Activated CD4-positive, alpha-beta T cell treated with anti-CD3 and anti-CD28 coated beads for 36 hours (primary cell): ENCODE measurements at regions of chr7 and their contacts with region 1.

Region 1: GRCh38 chr7:134632937-134633540 is 13.6 kb upstream of the BPGM start:
- DNase-seq: peak; percentile 49
- ATAC-seq: peak; percentile 63
- H3K4me3 Mint-ChIP-seq: no peak overlapping the region
- H3K27ac Mint-ChIP-seq: no peak overlapping the region
- H3K4me1 Mint-ChIP-seq: peaks cover 30% of the 10 kb centered on the region
- H3K27me3 Mint-ChIP-seq: peaks cover 7% of the 10 kb centered on the region

Region 2: GRCh38 chr7:134403677-134404076 is 229.4 kb before region 1 on chr7:
- CTCF ChIA-PET with region 1: no interaction called
- POLR2A ChIA-PET with region 1: no interaction called
- intact Hi-C with region 1: no loop called
- DNase-seq: no peak
- ATAC-seq: no peak
- H3K4me3 Mint-ChIP-seq: no peak overlapping the region
- H3K27ac Mint-ChIP-seq: no peak overlapping the region
- H3K4me1 Mint-ChIP-seq: no peaks in the 10 kb centered on the region
- H3K27me3 Mint-ChIP-seq: peaks cover 19% of the 10 kb centered on the region

Region 3: DNA sequence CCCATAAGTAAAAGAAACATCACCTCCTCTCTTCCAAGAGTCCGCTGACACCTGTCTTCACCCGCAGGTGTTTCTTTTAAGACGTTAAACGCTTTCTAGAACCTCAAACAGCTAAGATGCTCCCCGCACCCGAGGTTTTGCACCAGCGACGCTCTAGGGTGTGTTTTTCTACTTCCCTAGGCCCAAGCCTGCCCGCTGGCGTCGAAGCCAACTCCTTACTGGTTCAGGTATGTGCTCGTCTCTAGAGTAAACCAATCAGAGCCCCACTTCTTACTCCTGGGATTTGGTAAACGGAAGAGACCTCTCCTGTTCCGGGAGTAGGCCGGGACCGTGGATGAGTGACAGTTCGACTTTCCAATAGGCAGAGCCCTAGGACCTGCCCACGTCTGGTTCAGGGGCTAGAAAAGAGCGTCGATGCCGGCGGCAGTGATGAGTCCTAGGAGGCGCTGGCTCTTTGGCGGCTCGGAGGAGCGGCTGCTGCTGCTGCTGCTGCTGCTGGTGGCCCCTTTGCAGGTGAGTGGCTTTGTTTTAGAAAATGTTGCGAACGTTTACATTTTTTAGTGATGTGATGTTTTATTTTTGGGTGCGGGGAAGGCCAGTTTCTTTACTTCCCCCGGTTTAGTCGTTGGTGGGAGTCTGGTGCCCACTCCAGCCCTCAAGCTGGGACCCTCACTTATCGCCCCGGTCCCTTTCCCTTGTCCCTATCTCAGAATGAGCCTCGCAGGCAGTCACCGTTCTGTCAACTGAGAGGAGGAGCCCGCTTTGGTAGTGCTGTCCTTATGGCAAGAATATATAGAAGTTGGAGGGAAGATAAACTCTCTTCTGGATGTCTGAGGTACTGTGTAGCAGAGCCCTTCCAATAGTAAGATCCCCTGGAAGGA is 13.6 kb after region 1 on chr7 and contains the start of gene BPGM:
- CTCF ChIA-PET with region 1: interaction called, 29 read pairs
- POLR2A ChIA-PET with region 1: no interaction called
- intact Hi-C with region 1: loop called (anchors 1 kb)
- DNase-seq: peak; percentile 97
- ATAC-seq: peak; percentile 99
- H3K4me3 Mint-ChIP-seq: no peak within 1 kb of the TSS
- H3K27ac Mint-ChIP-seq: no peak within 1 kb of the TSS
- H3K4me1 Mint-ChIP-seq: peaks cover 44% of the 10 kb centered on the region
- H3K27me3 Mint-ChIP-seq: no peaks in the 10 kb centered on the region
- total RNA-seq, gene BPGM: 17.5 to 18.6 TPM

Region 4: GRCh38 chr7:134710859-134711624 is 78.0 kb after region 1 on chr7:
- CTCF ChIA-PET with region 1: no interaction called
- POLR2A ChIA-PET with region 1: no interaction called
- intact Hi-C with region 1: loop called in 1 of 2 experiments (anchors 2 kb)
- DNase-seq: peak; percentile 80
- ATAC-seq: peak; percentile 94
- H3K4me3 Mint-ChIP-seq: peak overlapping the region; percentile 78
- H3K27ac Mint-ChIP-seq: peak overlapping the region; percentile 97
- H3K4me1 Mint-ChIP-seq: peaks cover 31% of the 10 kb centered on the region
- H3K27me3 Mint-ChIP-seq: no peaks in the 10 kb centered on the region

Region 5: GRCh38 chr7:134740376-134740775 is 107.3 kb after region 1 on chr7:
- CTCF ChIA-PET with region 1: no interaction called
- POLR2A ChIA-PET with region 1: no interaction called
- intact Hi-C with region 1: no loop called
- DNase-seq: no peak
- ATAC-seq: no peak
- H3K4me3 Mint-ChIP-seq: no peak overlapping the region
- H3K27ac Mint-ChIP-seq: no peak overlapping the region
- H3K4me1 Mint-ChIP-seq: peaks cover 35% of the 10 kb centered on the region
- H3K27me3 Mint-ChIP-seq: no peaks in the 10 kb centered on the region

Region 6: GRCh38 chr7:134845468-134845867 is 212.4 kb after region 1 on chr7:
- CTCF ChIA-PET with region 1: interaction called, 3 read pairs
- POLR2A ChIA-PET with region 1: no interaction called
- intact Hi-C with region 1: loop called in 1 of 2 experiments (anchors 5 kb)
- DNase-seq: no peak
- ATAC-seq: peak; percentile 78
- H3K4me3 Mint-ChIP-seq: no peak overlapping the region
- H3K27ac Mint-ChIP-seq: no peak overlapping the region
- H3K4me1 Mint-ChIP-seq: peaks cover 19% of the 10 kb centered on the region
- H3K27me3 Mint-ChIP-seq: no peaks in the 10 kb centered on the region

Region 7: DNA sequence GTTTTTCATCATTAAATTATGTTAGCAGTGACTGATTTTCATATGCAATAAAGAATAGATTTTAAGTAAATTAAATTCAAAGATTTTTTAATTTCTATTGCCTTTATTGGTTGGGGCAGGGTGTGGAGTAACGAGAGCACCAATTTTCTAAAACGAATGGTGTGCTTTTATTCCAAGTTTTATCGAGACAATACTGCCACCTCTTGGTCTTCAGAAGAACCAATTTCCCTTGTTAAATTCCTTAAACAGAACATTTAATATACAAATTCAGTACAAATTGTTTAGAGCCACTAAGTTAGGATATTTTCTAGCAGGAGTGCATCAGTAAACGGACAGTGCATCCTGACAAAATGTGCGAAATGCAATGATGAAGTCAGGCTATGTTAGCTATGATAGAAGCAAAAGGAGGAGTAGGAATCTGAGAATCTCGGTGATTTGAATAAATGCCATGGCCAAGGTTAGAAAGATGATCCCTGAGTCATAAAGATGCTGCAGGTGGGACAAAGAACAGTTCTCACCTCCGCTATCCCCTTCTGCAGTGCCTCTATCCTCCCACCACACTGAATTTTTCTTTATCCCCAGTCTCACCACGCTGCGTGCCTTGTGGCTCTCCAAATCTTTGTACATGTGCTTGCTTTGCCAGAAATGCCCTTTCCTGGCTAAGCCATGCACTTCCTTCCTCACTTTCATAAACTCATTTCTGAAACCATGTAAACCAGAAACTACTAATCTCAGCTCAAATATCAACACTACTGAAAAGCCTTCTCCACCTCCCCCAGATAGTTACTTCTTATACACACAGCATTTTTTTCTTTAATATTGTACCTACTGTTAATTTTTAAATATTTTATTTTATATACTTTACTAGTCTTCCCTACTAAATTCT is 321.4 kb after region 1 on chr7:
- CTCF ChIA-PET with region 1: interaction called, 45 read pairs
- POLR2A ChIA-PET with region 1: no interaction called
- intact Hi-C with region 1: loop called (anchors 1 kb)
- DNase-seq: no peak
- ATAC-seq: no peak
- H3K4me3 Mint-ChIP-seq: no peak overlapping the region
- H3K27ac Mint-ChIP-seq: no peak overlapping the region
- H3K4me1 Mint-ChIP-seq: peaks cover 2% of the 10 kb centered on the region
- H3K27me3 Mint-ChIP-seq: no peaks in the 10 kb centered on the region

Region 8: DNA sequence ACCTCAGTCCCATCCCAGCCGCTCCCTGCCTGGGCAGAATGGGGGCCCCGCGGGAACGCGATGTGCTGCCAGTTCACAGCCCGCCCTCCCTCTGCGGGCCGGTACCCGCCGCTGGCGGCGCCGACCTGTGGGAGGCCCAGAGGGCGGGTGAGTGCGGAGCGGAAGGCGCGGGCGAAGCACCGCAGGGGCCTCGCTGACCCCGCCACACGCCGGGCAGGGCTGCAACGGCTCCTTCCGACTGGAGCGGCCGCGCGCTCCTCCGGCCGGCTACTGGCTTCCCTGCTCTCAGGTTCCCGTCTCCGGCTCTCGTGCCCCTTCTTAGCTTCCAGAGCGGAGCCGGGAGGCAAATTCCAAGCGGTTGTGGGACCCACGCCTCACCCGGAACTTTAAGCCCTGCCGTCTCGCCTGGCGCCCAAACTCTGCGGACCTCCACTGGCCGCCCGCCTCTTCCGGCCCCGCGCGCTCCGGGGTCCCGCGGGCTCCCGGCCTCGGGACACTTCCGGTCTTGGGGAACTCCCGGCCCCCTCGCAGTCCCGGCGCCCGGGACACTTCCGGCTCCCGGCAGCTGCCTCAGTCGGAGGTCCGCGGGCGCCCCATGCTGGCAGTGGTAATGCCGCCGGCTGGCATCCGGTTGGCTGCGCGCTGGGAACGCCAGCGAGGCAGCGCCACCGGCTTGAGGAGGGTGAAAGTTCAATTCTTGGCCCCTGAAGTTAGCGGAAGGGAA is 537.4 kb after region 1 on chr7 and contains the start of gene CYREN:
- CTCF ChIA-PET with region 1: interaction called, 3 read pairs
- POLR2A ChIA-PET with region 1: no interaction called
- intact Hi-C with region 1: loop called in 1 of 2 experiments (anchors 2 kb)
- DNase-seq: peak; percentile 97
- ATAC-seq: peak; percentile 85
- H3K4me3 Mint-ChIP-seq: peak within 1 kb of the TSS; percentile 88
- H3K27ac Mint-ChIP-seq: peak within 1 kb of the TSS; percentile 96
- H3K4me1 Mint-ChIP-seq: peaks cover 50% of the 10 kb centered on the region
- H3K27me3 Mint-ChIP-seq: no peaks in the 10 kb centered on the region
- total RNA-seq, gene CYREN: 32.6 to 40.5 TPM